MCF 10A (cell line): ENCODE measurements at regions of chr3 and their contacts with region 1.

Region 1: GRCh38 chr3:32177702-32178198 is 60.7 kb upstream of the CMTM8 start:
- DNase-seq: peak; percentile 89
- H3K4me3 Mint-ChIP-seq: no peak overlapping the region
- H3K27ac Mint-ChIP-seq: no peak overlapping the region
- H3K4me1 Mint-ChIP-seq: peaks cover 15% of the 10 kb centered on the region
- H3K27me3 Mint-ChIP-seq: no peaks in the 10 kb centered on the region
- CTCF ChIP-seq: peak; percentile 75

Region 2: GRCh38 chr3:32226870-32227500 is 49.2 kb after region 1 on chr3:
- CTCF ChIA-PET with region 1: interaction called, 10 read pairs
- POLR2A ChIA-PET with region 1: no interaction called
- intact Hi-C with region 1: no loop called
- DNase-seq: peak; percentile 59
- H3K4me3 Mint-ChIP-seq: no peak overlapping the region
- H3K27ac Mint-ChIP-seq: no peak overlapping the region
- H3K4me1 Mint-ChIP-seq: peaks cover 10% of the 10 kb centered on the region
- H3K27me3 Mint-ChIP-seq: no peaks in the 10 kb centered on the region
- CTCF ChIP-seq: no peak

Region 3: GRCh38 chr3:32296256-32297204 is 118.8 kb after region 1 on chr3:
- CTCF ChIA-PET with region 1: interaction called, 41 read pairs
- POLR2A ChIA-PET with region 1: interaction called, 3 read pairs
- intact Hi-C with region 1: loop called (anchors 1 kb)
- DNase-seq: peak; percentile 70
- H3K4me3 Mint-ChIP-seq: no peak overlapping the region
- H3K27ac Mint-ChIP-seq: no peak overlapping the region
- H3K4me1 Mint-ChIP-seq: peaks cover 9% of the 10 kb centered on the region
- H3K27me3 Mint-ChIP-seq: no peaks in the 10 kb centered on the region
- CTCF ChIP-seq: peak; percentile 91

Region 4: DNA sequence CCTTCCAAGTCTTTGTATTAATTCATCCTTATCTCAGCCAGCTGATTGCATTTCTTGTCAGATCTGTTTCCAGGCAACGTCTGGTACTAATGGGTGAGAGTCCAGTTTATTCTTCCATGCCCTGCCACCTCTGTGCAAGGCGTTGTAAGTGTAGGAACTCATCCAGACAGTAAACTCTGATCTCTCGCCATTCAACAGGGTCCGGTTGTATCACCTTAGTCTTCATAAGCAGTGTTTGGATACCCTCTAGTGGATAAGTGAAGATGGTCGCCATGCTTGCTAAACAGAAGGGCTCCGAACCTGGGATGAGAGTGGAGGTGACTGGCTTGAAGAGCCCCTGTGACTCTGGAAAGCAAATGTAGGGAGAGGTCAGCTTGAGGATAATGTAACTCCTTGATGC is 162.3 kb after region 1 on chr3:
- CTCF ChIA-PET with region 1: interaction called, 5 read pairs
- POLR2A ChIA-PET with region 1: no interaction called
- intact Hi-C with region 1: loop called (anchors 1 kb)
- DNase-seq: peak; percentile 55
- H3K4me3 Mint-ChIP-seq: no peak overlapping the region
- H3K27ac Mint-ChIP-seq: no peak overlapping the region
- H3K4me1 Mint-ChIP-seq: no peaks in the 10 kb centered on the region
- H3K27me3 Mint-ChIP-seq: no peaks in the 10 kb centered on the region
- CTCF ChIP-seq: peak; percentile 43

Region 5: GRCh38 chr3:32667122-32667521 is 489.4 kb after region 1 on chr3:
- CTCF ChIA-PET with region 1: interaction called, 3 read pairs
- POLR2A ChIA-PET with region 1: no interaction called
- intact Hi-C with region 1: loop called (anchors 1 kb)
- DNase-seq: no peak
- H3K4me3 Mint-ChIP-seq: no peak overlapping the region
- H3K27ac Mint-ChIP-seq: no peak overlapping the region
- H3K4me1 Mint-ChIP-seq: no peaks in the 10 kb centered on the region
- H3K27me3 Mint-ChIP-seq: peaks cover 30% of the 10 kb centered on the region
- CTCF ChIP-seq: no peak